Left colon (tissue), 2 donors: ENCODE measurements at regions of chr5 and their contacts with region 1.

Region 1: GRCh38 chr5:117434254-117434653 is 859.6 kb upstream of the SEMA6A start:
- DNase-seq: no peak
- ATAC-seq: no peak

Region 2: DNA sequence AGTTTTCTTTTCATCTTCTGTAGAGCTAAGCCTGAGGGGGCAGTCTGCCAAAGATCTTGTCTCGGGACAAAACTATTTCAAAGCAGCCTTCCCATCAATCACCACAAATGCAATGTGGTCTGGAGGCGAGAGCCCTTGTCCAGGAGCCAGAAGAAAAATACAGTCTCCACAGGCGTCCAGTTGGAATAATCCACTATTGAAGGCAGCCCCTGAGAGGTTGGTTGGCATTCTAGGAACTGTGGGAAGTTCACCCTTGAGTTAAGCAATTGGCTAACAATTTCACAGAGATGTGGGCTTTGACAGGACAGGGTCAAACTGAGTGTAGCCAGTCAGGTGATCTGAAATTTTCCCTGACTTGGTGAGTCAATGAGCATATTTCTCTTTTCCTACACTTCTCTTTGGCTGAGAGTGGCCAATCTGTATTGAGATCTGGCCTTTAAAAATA is 931.6 kb before region 1 on chr5:
- intact Hi-C with region 1: loop called in 1 of 2 experiments (anchors 10 kb)
- DNase-seq: no peak
- ATAC-seq: no peak